Cardiac septum (tissue), 1 donor: ENCODE measurements at regions of chr19 and their contacts with region 1.

Region 1: GRCh38 chr19:45886427-45887199 is 672 bp upstream of the IRF2BP1 start:
- DNase-seq: peak; percentile 96

Region 2: DNA sequence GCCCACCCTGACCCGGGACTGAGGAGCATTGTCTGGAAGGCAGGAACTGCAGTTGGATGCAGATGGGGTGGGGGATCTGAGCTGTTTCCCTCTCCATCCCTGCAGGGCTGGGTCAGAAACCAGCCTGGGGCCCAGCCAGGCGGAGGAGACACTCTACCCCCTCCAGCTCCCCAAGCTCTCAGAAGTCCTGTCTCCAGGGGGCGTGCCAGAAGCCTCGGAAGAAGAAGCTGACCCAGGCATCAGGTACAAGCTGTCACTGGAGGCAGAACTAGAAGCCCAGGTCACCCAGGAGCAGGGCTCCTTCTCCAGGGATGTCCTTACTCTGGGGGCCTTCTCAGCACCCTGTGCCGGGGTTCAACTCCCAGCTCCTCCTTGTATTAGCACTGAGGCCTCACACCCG is 133.1 kb before region 1 on chr19:
- intact Hi-C with region 1: no loop called
- DNase-seq: no peak

Region 3: DNA sequence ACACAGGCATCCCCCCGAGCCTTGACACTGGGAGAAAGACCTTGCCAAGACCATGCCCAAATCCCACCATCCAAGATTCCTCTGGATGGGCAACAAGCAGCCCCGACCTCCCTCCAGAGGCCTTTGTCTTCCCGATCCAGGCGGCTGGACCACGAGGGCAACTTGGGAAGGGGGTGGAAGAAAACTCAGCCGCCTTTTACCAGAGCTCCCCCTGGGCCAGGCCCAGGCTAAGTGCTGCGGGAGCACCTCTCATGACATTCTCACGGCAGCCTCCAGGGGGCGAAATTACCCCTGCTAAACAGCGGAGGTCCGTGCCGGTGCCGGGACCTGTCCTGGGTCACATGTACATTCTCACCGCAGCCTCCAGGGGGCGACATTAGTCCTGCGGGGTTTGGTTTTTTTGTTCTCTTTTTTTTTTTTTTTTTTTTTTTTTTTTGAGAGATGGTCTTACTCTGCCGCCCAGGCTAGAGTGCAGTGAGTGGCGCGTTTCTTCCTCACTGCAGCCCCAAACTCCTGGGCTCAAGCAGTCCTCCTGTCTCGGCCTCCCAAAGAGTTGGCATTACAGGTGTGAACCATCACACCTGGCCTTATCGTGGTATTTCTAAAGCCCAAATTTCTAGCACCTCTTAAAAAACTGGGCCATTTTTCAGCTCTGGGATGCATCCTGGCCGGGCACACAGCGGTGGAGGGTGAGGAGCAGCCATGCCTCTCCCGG is 69.4 kb before region 1 on chr19:
- intact Hi-C with region 1: loop called (anchors 2 kb)
- DNase-seq: peak; percentile 96

Region 4: DNA sequence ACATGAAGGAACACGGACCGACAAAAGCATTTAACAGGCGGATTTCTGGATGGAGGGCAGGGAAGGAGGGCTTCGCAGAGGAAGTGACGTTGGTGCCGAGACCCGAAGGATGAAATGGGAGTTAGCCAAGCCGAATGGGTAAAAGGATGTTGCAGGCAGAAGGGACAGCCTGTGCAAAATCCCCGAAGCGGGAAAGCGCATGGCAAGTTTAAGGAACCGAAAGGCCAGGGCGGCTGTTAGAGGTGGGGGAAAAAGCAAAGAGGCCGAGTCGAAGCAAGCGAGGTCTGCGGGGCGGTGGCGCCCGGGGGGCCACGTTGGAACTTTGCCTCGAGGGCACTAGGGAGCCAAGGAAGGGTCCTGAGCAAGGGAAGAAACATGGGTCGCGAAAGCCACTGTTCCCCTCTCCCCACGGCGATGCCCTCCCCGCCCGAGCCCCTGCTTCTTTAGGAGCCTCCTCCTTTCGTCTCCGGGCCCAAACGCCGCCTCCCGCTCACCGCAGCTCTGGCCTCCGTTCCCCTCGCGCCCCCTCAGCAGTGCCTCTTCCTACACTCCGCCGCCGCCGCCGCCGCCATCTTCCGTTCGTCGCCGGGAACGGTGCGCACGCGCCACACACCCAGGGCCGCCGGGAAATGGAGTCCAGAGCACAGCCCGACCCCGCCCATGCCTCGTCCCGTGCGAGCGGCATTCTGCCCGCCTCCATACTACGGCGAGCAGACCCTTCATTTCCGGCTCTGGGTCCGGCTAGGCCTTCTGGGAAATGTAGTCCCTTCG is 23.9 kb before region 1 on chr19 and contains the start of gene SYMPK:
- intact Hi-C with region 1: loop called (anchors 1 kb)
- DNase-seq: peak; percentile 100
- total RNA-seq, gene SYMPK: 33.6 TPM

Region 5: GRCh38 chr19:46239193-46240024 is 352.8 kb after region 1 on chr19:
- intact Hi-C with region 1: no loop called
- DNase-seq: no peak